Endothelial cell of umbilical vein (primary cell): ENCODE measurements at regions of chr9 and their contacts with region 1.

Region 1: GRCh38 chr9:18255158-18255629 is 218.8 kb upstream of the ADAMTSL1 start:
- DNase-seq: peak; percentile 84
- H3K4me3 ChIP-seq: no peak overlapping the region
- H3K27ac ChIP-seq: no peak overlapping the region
- H3K4me1 ChIP-seq: peaks cover 2% of the 10 kb centered on the region
- H3K27me3 ChIP-seq: no peaks in the 10 kb centered on the region
- CTCF ChIP-seq: peak; percentile 76 to 81
- POLR2A ChIP-seq: no peak

Region 2: GRCh38 chr9:17978773-17979172 is 276.4 kb before region 1 on chr9:
- CTCF ChIA-PET with region 1: no interaction called
- POLR2A ChIA-PET with region 1: no interaction called
- dilution Hi-C with region 1: no loop called
- intact Hi-C with region 1: no loop called
- DNase-seq: no peak
- H3K4me3 ChIP-seq: no peak overlapping the region
- H3K27ac ChIP-seq: no peak overlapping the region
- H3K4me1 ChIP-seq: no peaks in the 10 kb centered on the region
- H3K27me3 ChIP-seq: peaks cover 0 to 2% of the 10 kb centered on the region in 2 experiments
- CTCF ChIP-seq: no peak
- POLR2A ChIP-seq: no peak

Region 3: DNA sequence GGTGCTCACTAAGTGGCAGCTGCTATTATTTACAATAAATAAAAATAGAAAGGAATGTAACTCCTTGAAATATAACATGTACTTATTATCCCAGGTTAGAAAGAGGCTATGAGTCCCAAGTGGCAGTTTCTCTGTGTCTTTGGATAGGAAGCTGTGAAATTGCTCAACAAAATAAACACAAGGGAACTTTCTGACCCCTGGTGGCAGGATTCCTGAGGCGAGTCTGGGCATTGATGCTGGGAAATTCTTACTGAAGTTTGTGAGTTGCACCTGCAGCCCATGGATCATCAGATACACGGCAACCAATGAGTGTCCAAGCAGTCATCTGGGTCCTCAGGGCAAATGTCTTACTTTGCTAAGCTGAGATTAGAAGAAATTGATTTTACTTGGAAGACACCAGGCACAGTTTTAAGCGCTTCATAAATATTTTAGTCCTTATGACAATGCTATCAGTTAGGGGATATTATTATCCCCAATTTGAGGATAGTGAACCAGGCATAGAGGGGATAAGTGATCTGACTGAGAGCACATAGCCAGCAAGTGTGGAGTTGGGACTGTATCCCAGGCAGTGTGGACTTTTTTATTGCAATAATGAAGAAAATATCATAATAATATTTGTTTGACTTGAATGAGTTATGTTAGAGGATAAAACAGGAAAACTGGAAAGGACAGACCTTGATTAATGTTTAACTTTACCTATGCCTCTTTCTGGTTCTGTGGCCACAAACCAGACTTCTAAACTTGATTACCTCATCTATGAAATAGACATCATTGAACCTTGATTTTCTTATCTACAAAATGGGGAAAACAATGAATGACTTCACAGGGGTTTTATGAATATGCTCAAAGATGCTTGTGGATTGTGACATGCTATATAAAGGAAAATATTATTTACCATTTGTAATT is 46.8 kb before region 1 on chr9:
- CTCF ChIA-PET with region 1: interaction called, 13 read pairs
- POLR2A ChIA-PET with region 1: no interaction called
- dilution Hi-C with region 1: no loop called
- intact Hi-C with region 1: no loop called
- DNase-seq: peak; percentile 52
- H3K4me3 ChIP-seq: no peak overlapping the region
- H3K27ac ChIP-seq: no peak overlapping the region
- H3K4me1 ChIP-seq: no peaks in the 10 kb centered on the region
- H3K27me3 ChIP-seq: no peaks in the 10 kb centered on the region
- CTCF ChIP-seq: peak; percentile 39 to 62
- POLR2A ChIP-seq: no peak

Region 4: GRCh38 chr9:18229992-18230676 is 25.1 kb before region 1 on chr9:
- CTCF ChIA-PET with region 1: no interaction called
- POLR2A ChIA-PET with region 1: no interaction called
- dilution Hi-C with region 1: no loop called
- intact Hi-C with region 1: no loop called
- DNase-seq: no peak
- H3K4me3 ChIP-seq: no peak overlapping the region
- H3K27ac ChIP-seq: no peak overlapping the region
- H3K4me1 ChIP-seq: no peaks in the 10 kb centered on the region
- H3K27me3 ChIP-seq: no peaks in the 10 kb centered on the region
- CTCF ChIP-seq: no peak
- POLR2A ChIP-seq: no peak

Region 5: DNA sequence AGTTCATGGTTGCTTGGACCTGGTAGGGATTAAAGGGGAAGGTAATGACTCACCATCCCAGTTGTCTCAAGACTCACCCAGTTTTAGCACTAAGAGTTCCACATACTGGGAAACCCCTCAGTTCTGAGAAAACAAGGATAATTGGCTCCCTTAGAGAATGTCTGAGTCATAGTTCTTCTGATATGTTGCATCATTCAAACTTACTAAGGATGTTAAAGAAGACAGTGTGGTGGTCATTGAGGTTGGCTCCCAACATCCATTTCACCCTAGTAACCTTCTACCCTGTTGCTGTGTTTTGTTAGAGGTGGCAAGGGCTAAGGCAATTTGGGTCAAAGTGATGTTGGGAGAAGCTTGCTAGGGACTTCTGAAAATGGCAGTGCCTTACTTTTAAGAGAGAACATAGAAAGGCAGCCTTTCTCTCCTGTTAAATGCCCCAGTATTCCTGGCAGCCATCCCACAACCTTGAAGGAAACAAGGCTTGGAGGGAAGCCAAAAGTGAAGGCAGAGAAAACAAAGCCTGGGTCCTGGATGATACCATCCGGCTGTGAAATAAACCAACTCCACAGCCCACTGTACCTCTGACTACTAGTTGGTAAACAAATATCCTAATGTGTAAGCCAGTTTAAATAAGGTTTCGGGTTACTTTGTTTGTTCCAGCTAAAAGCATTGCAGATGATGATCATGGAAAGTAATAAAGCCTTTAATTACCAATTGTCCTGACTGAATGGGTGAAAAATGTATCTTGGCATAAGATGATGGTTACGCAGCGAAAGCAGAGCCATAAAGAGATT is 138.3 kb after region 1 on chr9:
- CTCF ChIA-PET with region 1: interaction called, 61 read pairs
- POLR2A ChIA-PET with region 1: no interaction called
- dilution Hi-C with region 1: no loop called
- intact Hi-C with region 1: loop called (anchors 1 kb)
- DNase-seq: peak; percentile 98
- H3K4me3 ChIP-seq: no peak overlapping the region
- H3K27ac ChIP-seq: peak overlapping the region; percentile 98
- H3K4me1 ChIP-seq: peaks cover 44% of the 10 kb centered on the region
- H3K27me3 ChIP-seq: no peaks in the 10 kb centered on the region
- CTCF ChIP-seq: no peak
- POLR2A ChIP-seq: no peak

Region 6: DNA sequence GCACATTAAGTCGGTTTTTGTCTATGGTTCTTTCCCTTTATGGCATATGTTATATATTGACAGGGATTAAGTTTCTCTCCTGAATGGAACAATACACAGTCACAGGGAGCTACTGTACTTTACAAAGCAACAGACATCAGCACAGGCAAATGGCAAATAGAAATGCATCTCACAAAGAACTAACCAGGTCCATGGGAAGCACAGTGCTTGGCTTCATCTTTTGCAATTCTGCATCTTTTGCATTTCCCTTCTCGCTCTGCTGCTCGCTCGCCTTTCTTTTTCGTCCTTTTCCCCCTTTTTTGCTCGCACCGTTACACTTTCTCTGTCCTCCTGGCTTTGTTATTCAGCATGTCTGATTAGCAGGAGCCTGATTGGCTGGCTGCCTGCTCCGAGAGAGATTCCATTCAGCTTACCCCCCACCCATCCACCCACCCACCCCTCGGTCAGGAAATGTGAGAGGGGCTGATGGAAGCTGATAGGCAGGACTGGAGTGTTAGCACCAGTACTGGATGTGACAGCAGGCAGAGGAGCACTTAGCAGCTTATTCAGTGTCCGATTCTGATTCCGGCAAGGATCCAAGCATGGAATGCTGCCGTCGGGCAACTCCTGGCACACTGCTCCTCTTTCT is 218.6 kb after region 1 on chr9 and contains the start of gene ADAMTSL1:
- CTCF ChIA-PET with region 1: interaction called, 27 read pairs
- POLR2A ChIA-PET with region 1: no interaction called
- dilution Hi-C with region 1: no loop called
- intact Hi-C with region 1: no loop called
- DNase-seq: peak; percentile 93
- H3K4me3 ChIP-seq: peak within 1 kb of the TSS; percentile 35 to 51 (median 38)
- H3K27ac ChIP-seq: peak within 1 kb of the TSS; percentile 48
- H3K4me1 ChIP-seq: peaks cover 37% of the 10 kb centered on the region
- H3K27me3 ChIP-seq: no peaks in the 10 kb centered on the region
- CTCF ChIP-seq: no peak
- POLR2A ChIP-seq: peak; percentile 33
- total RNA-seq, gene ADAMTSL1: 16.9 and 18.4 TPM in 2 replicates

Region 7: GRCh38 chr9:18791074-18791473 is 535.9 kb after region 1 on chr9:
- CTCF ChIA-PET with region 1: interaction called, 5 read pairs
- POLR2A ChIA-PET with region 1: no interaction called
- dilution Hi-C with region 1: no loop called
- intact Hi-C with region 1: loop called (anchors 5 kb)
- DNase-seq: no peak
- H3K4me3 ChIP-seq: no peak overlapping the region
- H3K27ac ChIP-seq: no peak overlapping the region
- H3K4me1 ChIP-seq: peaks cover 18% of the 10 kb centered on the region
- H3K27me3 ChIP-seq: no peaks in the 10 kb centered on the region
- CTCF ChIP-seq: peak; percentile 25 to 36
- POLR2A ChIP-seq: no peak

Region 8: DNA sequence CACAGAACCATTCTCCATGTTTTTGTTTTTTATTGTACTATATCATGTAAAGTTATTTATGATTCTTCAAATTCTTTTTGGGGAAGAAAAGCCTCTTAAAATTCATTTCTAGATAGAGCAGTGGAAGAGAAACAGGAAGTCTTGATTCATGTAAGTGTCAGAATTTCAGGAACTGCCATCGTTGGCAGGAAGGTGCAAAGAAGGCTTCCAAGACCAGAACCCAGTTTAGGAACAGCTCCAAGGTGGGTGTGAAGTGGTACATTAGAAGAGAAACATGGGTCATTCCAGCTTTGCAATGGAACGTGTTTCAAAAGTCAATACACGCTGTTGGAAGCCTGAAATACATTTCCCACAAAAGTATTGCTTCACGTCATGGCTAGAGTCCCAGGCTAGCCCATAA is 763.0 kb after region 1 on chr9:
- CTCF ChIA-PET with region 1: interaction called, 5 read pairs
- POLR2A ChIA-PET with region 1: no interaction called
- dilution Hi-C with region 1: no loop called
- intact Hi-C with region 1: loop called (anchors 1 kb)
- DNase-seq: no peak
- H3K4me3 ChIP-seq: no peak overlapping the region
- H3K27ac ChIP-seq: no peak overlapping the region
- H3K4me1 ChIP-seq: no peaks in the 10 kb centered on the region
- H3K27me3 ChIP-seq: no peaks in the 10 kb centered on the region
- CTCF ChIP-seq: no peak
- POLR2A ChIP-seq: no peak

Region 9: GRCh38 chr9:19456996-19457692 is 1202.0 kb after region 1 on chr9:
- CTCF ChIA-PET with region 1: interaction called, 5 read pairs
- POLR2A ChIA-PET with region 1: no interaction called
- dilution Hi-C with region 1: no loop called
- intact Hi-C with region 1: loop called (anchors 1 kb)
- DNase-seq: peak; percentile 80
- H3K4me3 ChIP-seq: no peak overlapping the region
- H3K27ac ChIP-seq: no peak overlapping the region
- H3K4me1 ChIP-seq: peaks cover 6% of the 10 kb centered on the region
- H3K27me3 ChIP-seq: no peaks in the 10 kb centered on the region
- CTCF ChIP-seq: peak; percentile 88 to 93
- POLR2A ChIP-seq: no peak